Heart right ventricle (tissue), 16 donors: ENCODE measurements at regions of chr7 and their contacts with region 1.

Region 1: GRCh38 chr7:94657771-94658693 is 2.1 kb upstream of the SGCE start:
- DNase-seq: peak; percentile 86 to 91
- ATAC-seq: peak; percentile 81 to 98 (median 92)
- H3K4me3 ChIP-seq: peak overlapping the region in 9 of 10 donors; percentile 60 to 89 (median 69)
- H3K27ac ChIP-seq: peak overlapping the region in 4 of 10 donors; percentile 4 to 56 (median 49)
- H3K4me1 ChIP-seq: peaks cover 0 to 30% (median 16%) of the 10 kb centered on the region in 9 donors
- H3K27me3 ChIP-seq: peaks cover 0 to 42% (median 18%) of the 10 kb centered on the region in 7 donors
- CTCF ChIP-seq: no peak

Region 2: GRCh38 chr7:94509879-94510581 is 148.0 kb before region 1 on chr7:
- intact Hi-C with region 1: loop called in 4 of 10 experiments (anchors 5 to 10 kb)
- DNase-seq: peak; percentile 64
- ATAC-seq: peak; percentile 81 to 95 (median 88)
- H3K4me3 ChIP-seq: peak overlapping the region; percentile 73 to 96 (median 90)
- H3K27ac ChIP-seq: peak overlapping the region; percentile 92 to 98 (median 95)
- H3K4me1 ChIP-seq: peaks cover 0 to 43% (median 33%) of the 10 kb centered on the region in 9 donors
- H3K27me3 ChIP-seq: no peaks in the 10 kb centered on the region
- CTCF ChIP-seq: peak in 7 of 9 donors; percentile 6 to 60 (median 33)

Region 3: DNA sequence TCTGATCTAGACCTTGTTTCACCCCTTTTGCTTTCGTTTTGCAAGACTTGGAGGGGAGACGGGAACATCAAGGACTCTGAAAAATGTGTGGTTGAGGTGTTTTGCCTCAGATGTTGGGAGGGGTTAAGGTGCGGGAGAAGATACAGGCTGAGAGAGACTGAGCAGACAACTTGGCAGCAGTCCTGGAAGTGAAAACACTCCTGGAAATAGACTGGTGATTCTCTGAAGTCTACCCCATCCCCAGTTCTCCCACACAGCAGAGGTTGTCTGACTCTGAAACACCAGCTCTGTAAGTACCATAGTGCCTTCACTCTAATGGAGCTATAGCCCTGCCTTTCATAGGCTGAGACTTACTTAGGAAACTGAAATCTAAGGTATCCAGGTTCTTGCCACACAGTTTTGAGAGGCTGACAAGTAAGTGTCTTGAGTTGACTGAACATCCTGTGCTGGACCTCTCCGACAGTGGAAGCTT is 401.8 kb after region 1 on chr7:
- intact Hi-C with region 1: no loop called
- DNase-seq: peak in 1 of 2 donors; percentile 19
- ATAC-seq: peak in 7 of 8 donors; percentile 29 to 85 (median 66)
- H3K4me3 ChIP-seq: no peak overlapping the region
- H3K27ac ChIP-seq: no peak overlapping the region
- H3K4me1 ChIP-seq: peaks cover 0 to 9% (median 0%) of the 10 kb centered on the region in 9 donors
- H3K27me3 ChIP-seq: no peaks in the 10 kb centered on the region
- CTCF ChIP-seq: no peak